Mammary epithelial cell (primary cell): ENCODE measurements at regions of chr6 and their contacts with region 1.

Region 1: GRCh38 chr6:129393654-129394053 is 316.3 kb downstream of the ARHGAP18 start:
- DNase-seq: no peak
- H3K4me3 ChIP-seq: no peak overlapping the region
- H3K27ac ChIP-seq: no peak overlapping the region
- H3K4me1 ChIP-seq: no peaks in the 10 kb centered on the region
- H3K27me3 ChIP-seq: no peaks in the 10 kb centered on the region
- CTCF ChIP-seq: no peak

Region 2: GRCh38 chr6:129432738-129433137 is 39.1 kb after region 1 on chr6:
- CTCF ChIA-PET with region 1: interaction called, 21 read pairs
- dilution Hi-C with region 1: no loop called
- in situ Hi-C with region 1: no loop called
- intact Hi-C with region 1: no loop called
- DNase-seq: peak; percentile 9
- H3K4me3 ChIP-seq: no peak overlapping the region
- H3K27ac ChIP-seq: no peak overlapping the region
- H3K4me1 ChIP-seq: no peaks in the 10 kb centered on the region
- H3K27me3 ChIP-seq: no peaks in the 10 kb centered on the region
- CTCF ChIP-seq: peak; percentile 39 to 54